ENCODE measurements at regions of chr12 and their contacts with region 1.

Region 1: GRCh38 chr12:79674629-79675028 is 16.1 kb downstream of the PAWR start:
- DNase-seq: no peak
- ATAC-seq: no peak
- H3K4me3 Mint-ChIP-seq: peak overlapping the region; percentile 34
- H3K27ac Mint-ChIP-seq: peak overlapping the region; percentile 58
- H3K4me1 Mint-ChIP-seq: peaks cover 76% of the 10 kb centered on the region
- H3K27me3 Mint-ChIP-seq: no peaks in the 10 kb centered on the region
- CTCF ChIP-seq: no peak

Region 2: GRCh38 chr12:78666584-78666983 is 1008.0 kb before region 1 on chr12:
- CTCF ChIA-PET with region 1: no interaction called
- POLR2A ChIA-PET with region 1: interaction called, 12 read pairs
- DNase-seq: no peak
- ATAC-seq: no peak
- H3K4me3 Mint-ChIP-seq: no peak overlapping the region
- H3K27ac Mint-ChIP-seq: no peak overlapping the region
- H3K4me1 Mint-ChIP-seq: peaks cover 4% of the 10 kb centered on the region
- H3K27me3 Mint-ChIP-seq: peaks cover 61% of the 10 kb centered on the region
- CTCF ChIP-seq: no peak